Common myeloid progenitor, CD34-positive (primary cell): ENCODE measurements at regions of chr15 and their contacts with region 1.

Region 1: GRCh38 chr15:40906091-40906990 is 12.1 kb downstream of the VPS18 start:
- DNase-seq: peak; percentile 82 to 93 (median 91)
- H3K4me3 ChIP-seq: peak overlapping the region; percentile 30 to 87 (median 73)
- H3K27ac ChIP-seq: peak overlapping the region; percentile 7 to 73
- H3K4me1 ChIP-seq: peaks cover 6 to 65% (median 49%) of the 10 kb centered on the region in 4 experiments
- H3K27me3 ChIP-seq: no peaks in the 10 kb centered on the region

Region 2: GRCh38 chr15:40918146-40918798 is 11.9 kb after region 1 on chr15:
- CTCF ChIA-PET with region 1: interaction called, 18 read pairs
- POLR2A ChIA-PET with region 1: interaction called, 4 read pairs
- DNase-seq: no peak
- H3K4me3 ChIP-seq: no peak overlapping the region
- H3K27ac ChIP-seq: no peak overlapping the region
- H3K4me1 ChIP-seq: no peaks in the 10 kb centered on the region
- H3K27me3 ChIP-seq: peaks cover 0 to 2% (median 0%) of the 10 kb centered on the region in 5 experiments

Region 3: GRCh38 chr15:40928821-40929659 is 22.7 kb after region 1 on chr15 and contains the start of gene DLL4:
- CTCF ChIA-PET with region 1: interaction called, 71 read pairs
- POLR2A ChIA-PET with region 1: interaction called, 4 read pairs
- DNase-seq: peak in 2 of 3 donors; percentile 56 to 67
- H3K4me3 ChIP-seq: peak within 1 kb of the TSS in 6 of 7 experiments; percentile 38 to 70 (median 56)
- H3K27ac ChIP-seq: no peak within 1 kb of the TSS
- H3K4me1 ChIP-seq: peaks cover 8 to 78% (median 75%) of the 10 kb centered on the region in 4 experiments
- H3K27me3 ChIP-seq: peaks cover 3 to 83% (median 35%) of the 10 kb centered on the region in 5 experiments

Region 4: GRCh38 chr15:40952901-40953712 is 46.8 kb after region 1 on chr15 and contains the start of gene CHAC1:
- CTCF ChIA-PET with region 1: interaction called, 24 read pairs
- POLR2A ChIA-PET with region 1: no interaction called
- DNase-seq: peak; percentile 86 to 94 (median 94)
- H3K4me3 ChIP-seq: peak within 1 kb of the TSS; percentile 38 to 83 (median 63)
- H3K27ac ChIP-seq: peak within 1 kb of the TSS in 1 of 2 experiments; percentile 74
- H3K4me1 ChIP-seq: peaks cover 0 to 26% (median 19%) of the 10 kb centered on the region in 4 experiments
- H3K27me3 ChIP-seq: peaks cover 0 to 8% (median 0%) of the 10 kb centered on the region in 5 experiments

Region 5: GRCh38 chr15:41105348-41106334 is 199.3 kb after region 1 on chr15:
- CTCF ChIA-PET with region 1: no interaction called
- POLR2A ChIA-PET with region 1: no interaction called
- DNase-seq: peak in 2 of 3 donors; percentile 9 to 17
- H3K4me3 ChIP-seq: no peak overlapping the region
- H3K27ac ChIP-seq: no peak overlapping the region
- H3K4me1 ChIP-seq: no peaks in the 10 kb centered on the region
- H3K27me3 ChIP-seq: no peaks in the 10 kb centered on the region

Region 6: GRCh38 chr15:41180206-41180789 is 274.0 kb after region 1 on chr15:
- CTCF ChIA-PET with region 1: interaction called, 66 read pairs
- POLR2A ChIA-PET with region 1: no interaction called
- DNase-seq: no peak
- H3K4me3 ChIP-seq: no peak overlapping the region
- H3K27ac ChIP-seq: no peak overlapping the region
- H3K4me1 ChIP-seq: peaks cover 0 to 4% (median 0%) of the 10 kb centered on the region in 4 experiments
- H3K27me3 ChIP-seq: no peaks in the 10 kb centered on the region